ENCODE measurements at regions of chr17 and their contacts with region 1.

Region 1: GRCh38 chr17:30093463-30094147 is 23.0 kb upstream of the NSRP1 start:
- DNase-seq: peak; percentile 32
- ATAC-seq: peak; percentile 88
- H3K4me3 ChIP-seq: no peak overlapping the region
- H3K27ac ChIP-seq: no peak overlapping the region
- H3K4me1 ChIP-seq: peaks cover 3% of the 10 kb centered on the region; the same call in 1 of the 2 replicates
- H3K27me3 ChIP-seq: no peaks in the 10 kb centered on the region; a peak in 1 of 4 replicates
- CTCF ChIP-seq: peak; percentile 63 to 82 (median 70); a peak in 5 of 6 replicates
- EP300 ChIP-seq: no peak
- POLR2A ChIP-seq: no peak
- RAD21 ChIP-seq: peak; percentile 88

Region 2: GRCh38 chr17:28500712-28501379 is 1592.8 kb before region 1 on chr17:
- CTCF ChIA-PET with region 1: no interaction called
- POLR2A ChIA-PET with region 1: no interaction called
- RAD21 ChIA-PET with region 1: no interaction called
- SMC1A ChIA-PET with region 1: no interaction called
- in situ Hi-C with region 1: no loop called
- intact Hi-C with region 1: no loop called
- DNase-seq: peak; percentile 63
- ATAC-seq: peak; percentile 93
- H3K4me3 ChIP-seq: peak overlapping the region; percentile 59
- H3K27ac ChIP-seq: peak overlapping the region; percentile 87
- H3K4me1 ChIP-seq: peaks cover 26% of the 10 kb centered on the region
- H3K27me3 ChIP-seq: no peaks in the 10 kb centered on the region
- CTCF ChIP-seq: no peak
- EP300 ChIP-seq: no peak
- POLR2A ChIP-seq: peak; percentile 47; the same call in 1 of the 2 replicates
- RAD21 ChIP-seq: no peak

Region 3: GRCh38 chr17:30021708-30022317 is 71.8 kb before region 1 on chr17:
- CTCF ChIA-PET with region 1: interaction called, 106 read pairs
- POLR2A ChIA-PET with region 1: no interaction called
- RAD21 ChIA-PET with region 1: interaction called, 5 read pairs
- SMC1A ChIA-PET with region 1: interaction called, 6 read pairs
- in situ Hi-C with region 1: no loop called
- intact Hi-C with region 1: no loop called
- DNase-seq: no peak
- ATAC-seq: peak; percentile 77
- H3K4me3 ChIP-seq: no peak overlapping the region
- H3K27ac ChIP-seq: no peak overlapping the region
- H3K4me1 ChIP-seq: no peaks in the 10 kb centered on the region
- H3K27me3 ChIP-seq: no peaks in the 10 kb centered on the region
- CTCF ChIP-seq: peak; percentile 71 to 75 (median 75)
- EP300 ChIP-seq: no peak
- POLR2A ChIP-seq: no peak
- RAD21 ChIP-seq: peak; percentile 82

Region 4: GRCh38 chr17:30031214-30031869 is 62.3 kb before region 1 on chr17:
- CTCF ChIA-PET with region 1: interaction called, 106 read pairs
- POLR2A ChIA-PET with region 1: interaction called, 3 read pairs
- RAD21 ChIA-PET with region 1: interaction called, 13 read pairs
- SMC1A ChIA-PET with region 1: interaction called, 30 read pairs
- in situ Hi-C with region 1: loop called (anchors 5 kb)
- intact Hi-C with region 1: loop called (anchors 2 kb)
- DNase-seq: peak; percentile 33
- ATAC-seq: peak; percentile 98
- H3K4me3 ChIP-seq: no peak overlapping the region
- H3K27ac ChIP-seq: no peak overlapping the region
- H3K4me1 ChIP-seq: no peaks in the 10 kb centered on the region
- H3K27me3 ChIP-seq: no peaks in the 10 kb centered on the region; a peak in 1 of 4 replicates
- CTCF ChIP-seq: no peak
- EP300 ChIP-seq: no peak
- POLR2A ChIP-seq: no peak
- RAD21 ChIP-seq: no peak

Region 5: DNA sequence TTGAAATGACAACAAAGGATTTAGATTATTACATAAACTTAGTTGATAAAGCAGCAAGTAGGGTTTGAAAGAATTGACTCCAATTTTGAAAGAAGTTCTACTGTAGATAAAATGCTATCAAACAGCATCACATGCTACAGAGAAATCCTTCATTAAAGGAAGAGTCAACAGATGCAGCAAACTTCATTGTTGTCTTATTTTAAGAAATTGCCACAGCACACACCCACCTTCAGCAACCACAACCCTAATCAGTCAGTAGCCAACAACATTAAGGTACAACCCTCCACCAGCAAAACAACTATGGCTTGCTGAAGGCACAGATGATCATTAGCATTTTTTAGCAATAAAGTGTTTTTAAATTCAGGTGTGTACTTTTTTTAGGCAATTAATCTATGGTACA is 52.1 kb before region 1 on chr17:
- CTCF ChIA-PET with region 1: interaction called, 10 read pairs
- POLR2A ChIA-PET with region 1: no interaction called
- RAD21 ChIA-PET with region 1: no interaction called
- SMC1A ChIA-PET with region 1: interaction called, 8 read pairs
- in situ Hi-C with region 1: no loop called
- intact Hi-C with region 1: no loop called
- DNase-seq: no peak
- ATAC-seq: no peak
- H3K4me3 ChIP-seq: no peak overlapping the region
- H3K27ac ChIP-seq: no peak overlapping the region
- H3K4me1 ChIP-seq: no peaks in the 10 kb centered on the region
- H3K27me3 ChIP-seq: no peaks in the 10 kb centered on the region
- CTCF ChIP-seq: no peak
- EP300 ChIP-seq: no peak
- POLR2A ChIP-seq: no peak
- RAD21 ChIP-seq: no peak

Region 6: DNA sequence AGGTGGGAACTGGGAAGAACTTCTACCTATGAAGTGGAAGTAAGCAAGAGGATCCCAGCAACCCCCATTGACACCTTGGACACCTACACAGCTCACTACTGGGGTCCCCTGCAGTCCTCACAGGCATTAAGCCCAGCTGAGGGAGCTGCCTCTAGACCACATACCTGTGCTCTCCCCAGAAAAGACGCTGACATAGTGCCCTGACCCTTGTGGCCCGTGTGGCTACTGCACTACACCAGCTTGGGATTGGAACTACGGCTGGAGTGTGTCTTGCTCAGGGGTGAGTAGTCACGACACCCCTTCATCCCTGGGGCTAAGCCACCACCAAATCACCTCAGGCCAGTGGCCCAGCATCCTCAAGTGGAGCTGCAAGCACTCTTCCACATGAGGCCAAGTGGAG is 31.2 kb before region 1 on chr17:
- CTCF ChIA-PET with region 1: interaction called, 10 read pairs
- POLR2A ChIA-PET with region 1: no interaction called
- RAD21 ChIA-PET with region 1: no interaction called
- SMC1A ChIA-PET with region 1: no interaction called
- in situ Hi-C with region 1: no loop called
- intact Hi-C with region 1: no loop called
- DNase-seq: no peak
- ATAC-seq: no peak
- H3K4me3 ChIP-seq: no peak overlapping the region
- H3K27ac ChIP-seq: no peak overlapping the region
- H3K4me1 ChIP-seq: no peaks in the 10 kb centered on the region
- H3K27me3 ChIP-seq: no peaks in the 10 kb centered on the region; a peak in 1 of 4 replicates
- CTCF ChIP-seq: no peak
- EP300 ChIP-seq: no peak
- POLR2A ChIP-seq: no peak
- RAD21 ChIP-seq: no peak

Region 7: DNA sequence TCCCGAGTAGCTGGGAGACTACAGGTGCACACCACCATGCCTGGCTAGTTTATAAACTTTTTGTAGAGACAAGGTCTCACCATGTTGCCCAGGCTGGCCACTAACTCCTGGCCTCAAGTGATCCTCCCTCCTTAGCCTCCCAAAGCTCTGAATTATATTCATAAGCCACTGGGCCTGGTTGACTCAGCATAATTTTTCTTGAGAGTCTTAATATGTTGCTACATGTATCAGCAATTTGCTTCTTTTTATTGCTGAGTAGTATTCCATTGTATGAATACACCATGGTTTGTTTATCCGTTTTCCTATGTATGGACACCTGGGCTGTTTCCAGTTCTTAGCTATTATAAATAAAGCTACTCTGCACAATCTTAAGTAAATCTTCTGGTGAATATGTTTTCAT is 19.4 kb before region 1 on chr17:
- CTCF ChIA-PET with region 1: interaction called, 15 read pairs
- POLR2A ChIA-PET with region 1: no interaction called
- RAD21 ChIA-PET with region 1: no interaction called
- SMC1A ChIA-PET with region 1: interaction called, 5 read pairs
- in situ Hi-C with region 1: no loop called
- intact Hi-C with region 1: no loop called
- DNase-seq: no peak
- ATAC-seq: no peak
- H3K4me3 ChIP-seq: no peak overlapping the region
- H3K27ac ChIP-seq: no peak overlapping the region
- H3K4me1 ChIP-seq: no peaks in the 10 kb centered on the region
- H3K27me3 ChIP-seq: peaks cover 0 to 5% of the 10 kb centered on the region in 2 experiments; a peak in 1 of 4 replicates
- CTCF ChIP-seq: no peak
- EP300 ChIP-seq: no peak
- POLR2A ChIP-seq: no peak
- RAD21 ChIP-seq: no peak

Region 8: GRCh38 chr17:30116661-30117551 is 23.3 kb after region 1 on chr17 and contains the start of gene NSRP1:
- CTCF ChIA-PET with region 1: interaction called, 12 read pairs
- POLR2A ChIA-PET with region 1: interaction called, 3 read pairs
- RAD21 ChIA-PET with region 1: interaction called, 4 read pairs
- SMC1A ChIA-PET with region 1: interaction called, 3 read pairs
- in situ Hi-C with region 1: no loop called
- intact Hi-C with region 1: no loop called
- DNase-seq: peak; percentile 89
- ATAC-seq: peak; percentile 91
- H3K4me3 ChIP-seq: peak within 1 kb of the TSS; percentile 95
- H3K27ac ChIP-seq: peak within 1 kb of the TSS; percentile 94
- H3K4me1 ChIP-seq: peaks cover 9% of the 10 kb centered on the region
- H3K27me3 ChIP-seq: no peaks in the 10 kb centered on the region
- CTCF ChIP-seq: no peak
- EP300 ChIP-seq: no peak
- POLR2A ChIP-seq: peak; percentile 100
- RAD21 ChIP-seq: no peak
- polyA plus RNA-seq, gene NSRP1: 57.2 to 69.7 TPM